Heart left ventricle (tissue), 16 donors: ENCODE measurements at regions of chr7 and their contacts with region 1.

Region 1: DNA sequence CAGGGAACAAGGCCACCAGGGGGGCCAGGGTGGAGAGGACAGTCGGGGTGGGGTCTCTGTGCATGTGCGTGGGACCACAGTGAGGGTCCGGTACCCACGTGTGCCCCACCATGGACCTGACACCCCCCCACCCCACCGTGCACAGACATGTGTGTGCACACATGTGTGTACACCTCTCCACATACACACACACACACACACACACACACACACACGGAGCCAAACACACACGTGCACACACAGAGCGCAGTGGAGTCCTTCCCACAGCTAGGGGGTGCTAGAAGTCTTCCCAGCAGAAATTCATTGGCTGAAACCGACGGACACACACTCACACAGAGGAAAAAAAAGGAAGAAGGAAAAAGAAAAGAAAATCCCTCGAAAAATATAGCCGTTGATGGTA is 42.8 kb upstream of the GNA12 start:
- DNase-seq: peak in 1 of 5 donors; percentile 41
- ATAC-seq: peak in 3 of 4 donors; percentile 64 to 81 (median 66)
- H3K4me3 ChIP-seq: no peak overlapping the region
- H3K27ac ChIP-seq: no peak overlapping the region
- H3K4me1 ChIP-seq: no peaks in the 10 kb centered on the region
- H3K27me3 ChIP-seq: no peaks in the 10 kb centered on the region
- CTCF ChIP-seq: peak; percentile 31 to 63 (median 49)
- POLR2A ChIP-seq: no peak

Region 2: GRCh38 chr7:2779086-2779485 is 107.8 kb before region 1 on chr7:
- intact Hi-C with region 1: no loop called
- DNase-seq: no peak
- ATAC-seq: no peak
- H3K4me3 ChIP-seq: no peak overlapping the region
- H3K27ac ChIP-seq: no peak overlapping the region
- H3K4me1 ChIP-seq: peaks cover 0 to 34% (median 8%) of the 10 kb centered on the region in 12 donors
- H3K27me3 ChIP-seq: no peaks in the 10 kb centered on the region
- CTCF ChIP-seq: no peak
- POLR2A ChIP-seq: no peak

Region 3: GRCh38 chr7:2934211-2934731 is 47.4 kb after region 1 on chr7:
- intact Hi-C with region 1: no loop called
- DNase-seq: peak in 1 of 5 donors; percentile 31
- ATAC-seq: no peak
- H3K4me3 ChIP-seq: no peak overlapping the region
- H3K27ac ChIP-seq: no peak overlapping the region
- H3K4me1 ChIP-seq: peaks cover 0 to 3% (median 0%) of the 10 kb centered on the region in 12 donors
- H3K27me3 ChIP-seq: peaks cover 0 to 42% (median 5%) of the 10 kb centered on the region in 9 donors
- CTCF ChIP-seq: no peak
- POLR2A ChIP-seq: no peak

Region 4: GRCh38 chr7:3673524-3673923 is 786.6 kb after region 1 on chr7:
- intact Hi-C with region 1: loop called in 1 of 10 experiments (anchors 10 kb)
- DNase-seq: no peak
- ATAC-seq: no peak
- H3K4me3 ChIP-seq: no peak overlapping the region
- H3K27ac ChIP-seq: no peak overlapping the region
- H3K4me1 ChIP-seq: no peaks in the 10 kb centered on the region
- H3K27me3 ChIP-seq: no peaks in the 10 kb centered on the region
- CTCF ChIP-seq: peak in 9 of 12 donors; percentile 17 to 47 (median 27)
- POLR2A ChIP-seq: no peak

Region 5: DNA sequence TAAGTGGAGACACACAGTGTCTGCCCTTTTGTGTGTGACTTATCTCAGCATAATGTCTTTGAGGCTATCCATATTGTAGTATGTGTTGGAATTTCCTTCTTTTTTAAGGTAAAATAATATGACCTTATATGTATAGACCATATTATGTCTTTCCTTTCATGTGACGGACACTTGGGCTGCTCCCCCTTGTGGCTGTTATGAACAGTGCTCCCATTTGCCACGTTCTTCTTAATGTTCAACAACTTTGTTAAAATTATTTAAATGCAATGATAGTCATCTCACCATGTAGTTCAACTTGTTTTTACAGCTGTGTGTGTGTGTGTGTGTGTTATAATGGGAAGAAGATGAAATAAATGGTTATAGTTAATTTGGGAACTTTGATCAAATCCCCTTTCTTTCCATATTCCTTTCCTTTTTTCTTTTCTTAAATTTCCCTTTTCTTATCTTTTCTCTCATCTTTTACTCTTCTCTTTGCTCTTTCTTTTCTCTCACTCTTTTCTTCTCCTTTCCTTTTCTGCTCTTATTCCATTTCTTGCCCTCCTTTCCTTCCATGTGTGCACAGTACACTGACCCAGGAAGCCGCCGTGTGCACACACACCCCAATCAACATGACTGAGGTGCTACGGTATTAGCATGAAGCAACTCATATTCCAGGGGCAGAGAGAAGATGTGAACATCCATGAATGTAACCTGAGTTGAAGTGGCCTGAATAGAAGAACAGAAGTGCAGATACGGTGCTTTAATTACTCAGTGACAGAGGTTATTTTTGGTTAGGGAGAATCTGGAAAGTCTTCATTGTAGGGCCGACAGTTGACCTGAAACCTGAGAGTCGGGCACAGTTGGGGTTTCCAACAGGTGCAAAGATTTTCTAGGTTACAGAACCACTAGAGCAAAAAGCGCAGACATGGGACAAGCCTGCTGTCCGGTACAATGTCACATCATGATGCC is 1010.8 kb after region 1 on chr7:
- intact Hi-C with region 1: loop called in 2 of 10 experiments (anchors 2 to 5 kb)
- DNase-seq: no peak
- ATAC-seq: peak in 1 of 4 donors; percentile 56
- H3K4me3 ChIP-seq: no peak overlapping the region
- H3K27ac ChIP-seq: no peak overlapping the region
- H3K4me1 ChIP-seq: peaks cover 0 to 3% (median 0%) of the 10 kb centered on the region in 12 donors
- H3K27me3 ChIP-seq: no peaks in the 10 kb centered on the region
- CTCF ChIP-seq: peak; percentile 64 to 85 (median 76)
- POLR2A ChIP-seq: no peak